Dendritic cell treated with granulocyte-macrophage colony-stimulating factor and Interleukin-4, amounts not matched to agents 40 ng/mL and 50 ng/mL, for 4 days (primary cell): ENCODE measurements at regions of chr2 and their contacts with region 1.

Region 1: GRCh38 chr2:55345064-55345463 is 74.6 kb downstream of the CCDC88A start:
- H3K4me3 Mint-ChIP-seq: no peak overlapping the region
- H3K27ac Mint-ChIP-seq: no peak overlapping the region
- H3K4me1 Mint-ChIP-seq: no peaks in the 10 kb centered on the region
- H3K27me3 Mint-ChIP-seq: no peaks in the 10 kb centered on the region

Region 2: DNA sequence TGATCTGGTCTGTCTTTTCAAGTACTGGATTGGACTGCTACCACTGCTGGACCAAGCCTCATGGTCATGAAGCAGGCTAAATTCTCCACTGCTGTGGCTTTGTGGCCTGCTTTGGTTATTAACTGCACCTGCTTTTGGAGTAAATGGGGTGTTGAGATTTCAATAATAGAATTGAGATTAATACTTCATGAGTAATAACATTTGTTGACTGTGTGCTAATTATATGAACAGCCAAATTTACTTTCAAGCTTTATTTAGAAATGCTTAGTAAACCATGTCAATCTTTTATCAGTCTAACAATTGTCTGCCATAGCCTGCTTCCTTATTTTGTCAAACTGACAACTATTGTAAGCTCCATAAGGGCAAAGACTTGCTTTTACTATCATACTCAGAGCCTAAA is 48.7 kb before region 1 on chr2:
- intact Hi-C with region 1: loop called (anchors 10 kb)
- H3K4me3 Mint-ChIP-seq: no peak overlapping the region
- H3K27ac Mint-ChIP-seq: no peak overlapping the region
- H3K4me1 Mint-ChIP-seq: no peaks in the 10 kb centered on the region
- H3K27me3 Mint-ChIP-seq: no peaks in the 10 kb centered on the region

Region 3: DNA sequence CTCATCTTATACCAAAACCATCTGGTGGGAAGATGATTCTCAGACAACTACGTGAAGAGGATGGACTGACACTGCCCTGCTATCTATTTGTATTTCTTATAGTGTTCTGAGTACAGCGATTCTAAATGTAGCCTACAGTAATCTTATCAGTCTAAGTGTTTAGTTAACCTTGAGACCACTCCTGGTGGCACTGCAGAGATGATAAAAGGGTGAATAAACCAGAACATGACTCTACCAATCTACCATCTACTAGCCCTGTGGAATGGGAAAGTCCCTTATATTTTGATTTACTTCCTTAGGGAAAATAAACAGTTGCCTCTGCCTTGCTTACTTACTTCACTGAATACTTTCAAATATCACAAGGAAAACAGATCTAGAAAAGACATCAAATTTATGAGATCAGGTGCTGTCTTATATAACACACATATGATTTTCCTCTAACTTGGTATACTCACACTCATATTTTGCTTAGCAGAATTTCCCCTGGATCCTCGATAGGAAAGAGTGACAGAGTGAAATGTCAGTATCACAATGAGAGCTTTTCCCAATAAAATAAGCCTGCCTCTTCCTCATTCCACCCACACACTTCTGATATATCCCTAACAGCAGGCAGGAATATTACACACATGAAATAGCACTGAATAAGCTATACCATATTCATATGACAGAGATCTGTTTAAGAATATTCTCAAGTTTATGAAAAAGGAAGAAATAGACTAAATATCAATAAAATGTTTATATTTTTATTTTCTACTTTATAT is 17.4 kb before region 1 on chr2:
- intact Hi-C with region 1: no loop called
- H3K4me3 Mint-ChIP-seq: no peak overlapping the region
- H3K27ac Mint-ChIP-seq: no peak overlapping the region
- H3K4me1 Mint-ChIP-seq: no peaks in the 10 kb centered on the region
- H3K27me3 Mint-ChIP-seq: no peaks in the 10 kb centered on the region

Region 4: GRCh38 chr2:55364189-55365055 is 19.4 kb after region 1 on chr2:
- intact Hi-C with region 1: no loop called
- H3K4me3 Mint-ChIP-seq: no peak overlapping the region
- H3K27ac Mint-ChIP-seq: no peak overlapping the region
- H3K4me1 Mint-ChIP-seq: peaks cover 7% of the 10 kb centered on the region
- H3K27me3 Mint-ChIP-seq: no peaks in the 10 kb centered on the region